CD14-positive monocyte (primary cell): ENCODE measurements at regions of chr13 and their contacts with region 1.

Region 1: DNA sequence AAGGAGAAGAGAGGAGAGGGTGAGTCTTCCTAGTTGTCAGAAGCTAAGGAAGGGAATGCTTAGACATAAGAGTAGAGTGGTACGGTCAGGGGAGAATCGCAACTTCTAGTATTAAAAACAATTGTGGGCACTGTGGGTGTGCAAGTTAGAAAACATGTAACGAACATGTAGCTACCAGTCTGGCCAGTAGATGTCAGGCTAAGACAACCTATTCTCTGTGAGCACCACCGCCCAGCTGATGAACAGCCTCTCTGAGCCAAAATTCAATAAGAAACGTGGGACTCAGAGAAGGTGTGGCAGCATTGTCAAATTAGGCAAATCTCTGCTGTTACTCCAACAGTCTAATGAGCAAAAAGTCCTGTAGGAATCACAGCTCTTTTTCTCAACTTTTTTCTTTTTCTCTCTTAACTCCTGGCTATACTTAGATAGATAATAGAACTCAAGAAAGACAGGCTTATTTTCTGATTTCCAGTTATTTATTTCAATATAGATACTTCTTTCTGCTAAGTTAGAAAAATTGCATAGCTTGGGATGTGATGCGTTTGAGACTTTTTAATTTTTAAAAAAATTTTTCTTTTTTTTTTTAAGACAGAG is 186.2 kb downstream of the USP12 start:
- DNase-seq: peak; percentile 66 to 79 (median 76)
- H3K4me3 ChIP-seq: no peak overlapping the region
- H3K4me3 Mint-ChIP-seq: no peak overlapping the region
- H3K27ac ChIP-seq: no peak overlapping the region
- H3K27ac Mint-ChIP-seq: peak overlapping the region in 4 of 7 donors; percentile 0 to 73 (median 52)
- H3K4me1 ChIP-seq: peaks cover 14 to 15% of the 10 kb centered on the region in 2 donors
- H3K4me1 Mint-ChIP-seq: peaks cover 18% of the 10 kb centered on the region
- H3K27me3 ChIP-seq: no peaks in the 10 kb centered on the region
- H3K27me3 Mint-ChIP-seq: peaks cover 0 to 2% (median 1%) of the 10 kb centered on the region in 3 donors
- CTCF ChIP-seq: peak; percentile 86

Region 2: DNA sequence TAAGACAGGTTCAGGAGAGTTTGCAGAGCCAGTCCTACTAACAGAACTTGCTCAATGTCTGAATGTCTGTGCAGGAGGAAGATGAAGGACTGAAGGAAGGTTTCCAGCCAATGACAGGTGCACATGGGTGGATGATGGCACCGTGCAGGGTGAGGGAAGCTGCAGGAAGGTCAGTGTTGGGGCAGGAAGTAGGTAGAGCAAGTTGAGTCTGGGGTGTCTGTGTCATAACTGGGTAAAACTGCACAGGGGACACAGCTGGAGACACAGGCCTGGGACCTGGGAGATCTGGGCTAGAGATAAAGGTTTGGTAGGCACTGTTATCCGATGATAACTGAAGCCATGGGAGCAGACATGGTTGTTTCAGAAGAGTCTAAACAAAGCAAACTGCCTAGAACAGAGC is 69.4 kb after region 1 on chr13:
- intact Hi-C with region 1: no loop called
- DNase-seq: no peak
- H3K4me3 ChIP-seq: no peak overlapping the region
- H3K4me3 Mint-ChIP-seq: no peak overlapping the region
- H3K27ac ChIP-seq: no peak overlapping the region
- H3K27ac Mint-ChIP-seq: no peak overlapping the region
- H3K4me1 ChIP-seq: no peaks in the 10 kb centered on the region
- H3K4me1 Mint-ChIP-seq: no peaks in the 10 kb centered on the region
- H3K27me3 ChIP-seq: no peaks in the 10 kb centered on the region
- H3K27me3 Mint-ChIP-seq: peaks cover 0 to 5% (median 3%) of the 10 kb centered on the region in 3 donors
- CTCF ChIP-seq: no peak

Region 3: GRCh38 chr13:27112006-27112405 is 126.6 kb after region 1 on chr13:
- intact Hi-C with region 1: no loop called
- DNase-seq: no peak
- H3K4me3 ChIP-seq: no peak overlapping the region
- H3K4me3 Mint-ChIP-seq: no peak overlapping the region
- H3K27ac ChIP-seq: no peak overlapping the region
- H3K27ac Mint-ChIP-seq: peak overlapping the region in 1 of 7 donors; percentile 46
- H3K4me1 ChIP-seq: no peaks in the 10 kb centered on the region
- H3K4me1 Mint-ChIP-seq: no peaks in the 10 kb centered on the region
- H3K27me3 ChIP-seq: no peaks in the 10 kb centered on the region
- H3K27me3 Mint-ChIP-seq: peaks cover 0 to 2% (median 0%) of the 10 kb centered on the region in 3 donors
- CTCF ChIP-seq: no peak

Region 4: DNA sequence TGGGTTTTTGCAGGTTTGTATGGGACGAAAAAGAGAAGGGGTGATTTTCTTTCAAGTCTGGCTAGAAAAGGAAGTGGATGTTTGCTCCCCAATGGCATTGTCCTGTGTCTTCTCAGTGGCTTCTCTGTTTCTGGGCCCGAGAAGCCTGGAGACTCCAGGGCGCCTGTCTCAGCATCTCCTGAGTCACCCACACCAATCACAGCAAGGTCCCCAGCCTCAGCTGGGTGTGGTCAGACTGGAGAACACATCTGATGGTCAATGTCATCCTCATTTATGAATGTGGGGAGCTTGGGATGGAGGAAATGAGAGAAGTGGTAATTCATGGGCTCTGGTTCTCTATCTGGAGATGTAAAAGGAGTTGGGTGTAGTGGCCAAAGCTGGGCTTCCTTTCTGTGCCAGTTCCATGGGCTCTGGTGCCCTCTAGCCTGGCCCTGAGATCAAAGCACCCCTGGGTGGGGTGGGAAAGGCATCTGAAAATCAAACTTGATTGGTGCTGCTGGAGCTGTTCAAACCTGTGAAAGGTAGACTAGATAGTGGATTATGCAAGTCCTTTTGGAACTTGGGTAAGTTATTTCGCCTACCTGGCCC is 298.6 kb after region 1 on chr13:
- intact Hi-C with region 1: loop called (anchors 5 to 10 kb)
- DNase-seq: peak; percentile 15 to 26 (median 17)
- H3K4me3 ChIP-seq: no peak overlapping the region
- H3K4me3 Mint-ChIP-seq: peak overlapping the region in 1 of 2 donors; percentile 17
- H3K27ac ChIP-seq: no peak overlapping the region
- H3K27ac Mint-ChIP-seq: no peak overlapping the region
- H3K4me1 ChIP-seq: no peaks in the 10 kb centered on the region
- H3K4me1 Mint-ChIP-seq: no peaks in the 10 kb centered on the region
- H3K27me3 ChIP-seq: no peaks in the 10 kb centered on the region
- H3K27me3 Mint-ChIP-seq: peaks cover 0 to 5% (median 2%) of the 10 kb centered on the region in 3 donors
- CTCF ChIP-seq: peak; percentile 43

Region 5: GRCh38 chr13:27362064-27362883 is 376.9 kb after region 1 on chr13:
- intact Hi-C with region 1: loop called (anchors 2 to 5 kb)
- DNase-seq: peak; percentile 69 to 76 (median 75)
- H3K4me3 ChIP-seq: peak overlapping the region in 2 of 3 experiments; percentile 13 to 69
- H3K4me3 Mint-ChIP-seq: peak overlapping the region; percentile 54 to 78
- H3K27ac ChIP-seq: no peak overlapping the region
- H3K27ac Mint-ChIP-seq: no peak overlapping the region
- H3K4me1 ChIP-seq: peaks cover 10 to 12% of the 10 kb centered on the region in 2 donors
- H3K4me1 Mint-ChIP-seq: peaks cover 8% of the 10 kb centered on the region
- H3K27me3 ChIP-seq: peaks cover 0 to 8% of the 10 kb centered on the region in 2 donors
- H3K27me3 Mint-ChIP-seq: peaks cover 7 to 27% (median 27%) of the 10 kb centered on the region in 3 donors
- CTCF ChIP-seq: peak; percentile 82